Activated naive CD4-positive, alpha-beta T cell treated with anti-CD3 and anti-CD28 coated beads, Interleukin-2, amount 10 ng/mL, durations not matched to agents 7 days and 5 days (primary cell): ENCODE measurements at regions of chr6 and their contacts with region 1.

Region 1: GRCh38 chr6:43143235-43144124 is 27.6 kb upstream of the SRF start:
- DNase-seq: peak; percentile 83
- H3K4me3 Mint-ChIP-seq: no peak overlapping the region
- H3K27ac Mint-ChIP-seq: no peak overlapping the region
- H3K4me1 Mint-ChIP-seq: peaks cover 17% of the 10 kb centered on the region
- H3K27me3 Mint-ChIP-seq: peaks cover 27% of the 10 kb centered on the region

Region 2: GRCh38 chr6:42901536-42901957 is 241.9 kb before region 1 on chr6:
- CTCF ChIA-PET with region 1: interaction called, 28 read pairs
- DNase-seq: peak; percentile 78
- H3K4me3 Mint-ChIP-seq: no peak overlapping the region
- H3K27ac Mint-ChIP-seq: no peak overlapping the region
- H3K4me1 Mint-ChIP-seq: peaks cover 17% of the 10 kb centered on the region
- H3K27me3 Mint-ChIP-seq: peaks cover 3% of the 10 kb centered on the region

Region 3: GRCh38 chr6:42911171-42912021 is 232.1 kb before region 1 on chr6:
- CTCF ChIA-PET with region 1: interaction called, 18 read pairs
- DNase-seq: no peak
- H3K4me3 Mint-ChIP-seq: no peak overlapping the region
- H3K27ac Mint-ChIP-seq: no peak overlapping the region
- H3K4me1 Mint-ChIP-seq: peaks cover 3% of the 10 kb centered on the region
- H3K27me3 Mint-ChIP-seq: peaks cover 56% of the 10 kb centered on the region

Region 4: DNA sequence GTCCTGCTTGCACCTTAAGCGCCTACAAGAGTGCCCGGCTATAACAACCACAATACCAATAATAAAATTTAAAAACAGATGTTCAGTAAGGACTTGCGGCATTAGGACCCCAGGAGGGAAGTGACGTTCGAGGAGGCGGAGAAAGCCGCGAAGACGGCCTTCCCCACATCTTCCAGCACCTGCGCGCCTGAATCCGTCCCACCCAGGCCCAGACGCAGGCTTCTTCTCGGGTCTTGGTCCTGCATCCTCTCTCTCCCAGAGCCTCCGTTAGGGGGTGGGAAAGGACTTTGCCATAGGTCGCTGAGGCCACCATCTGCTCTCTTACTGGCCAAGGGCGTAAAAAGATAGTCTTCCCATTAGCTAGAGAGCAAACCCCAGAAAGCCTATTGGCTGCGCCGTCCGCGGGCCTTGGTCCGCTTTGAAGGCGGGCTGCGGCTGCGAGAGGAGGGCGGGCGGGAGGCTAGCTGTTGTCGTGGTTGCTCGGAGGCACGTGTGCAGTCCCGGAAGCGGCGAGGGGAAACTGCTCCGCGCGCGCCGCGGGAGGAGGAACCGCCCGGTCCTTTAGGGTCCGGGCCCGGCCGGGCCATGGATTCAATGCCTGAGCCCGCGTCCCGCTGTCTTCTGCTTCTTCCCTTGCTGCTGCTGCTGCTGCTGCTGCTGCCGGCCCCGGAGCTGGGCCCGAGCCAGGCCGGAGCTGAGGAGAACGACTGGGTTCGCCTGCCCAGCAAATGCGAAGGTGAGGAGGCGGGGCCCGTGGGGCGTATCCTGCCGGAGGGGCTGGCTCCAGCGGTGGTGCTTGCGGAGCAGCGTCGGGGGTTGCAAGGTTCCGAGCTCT is 214.3 kb before region 1 on chr6 and contains the start of gene CNPY3:
- CTCF ChIA-PET with region 1: interaction called, 12 read pairs
- DNase-seq: peak; percentile 98
- H3K4me3 Mint-ChIP-seq: peak within 1 kb of the TSS; percentile 98
- H3K27ac Mint-ChIP-seq: peak within 1 kb of the TSS; percentile 100
- H3K4me1 Mint-ChIP-seq: peaks cover 41% of the 10 kb centered on the region
- H3K27me3 Mint-ChIP-seq: no peaks in the 10 kb centered on the region

Region 5: GRCh38 chr6:43009124-43009523 is 134.4 kb before region 1 on chr6:
- CTCF ChIA-PET with region 1: interaction called, 12 read pairs
- DNase-seq: peak; percentile 63
- H3K4me3 Mint-ChIP-seq: no peak overlapping the region
- H3K27ac Mint-ChIP-seq: no peak overlapping the region
- H3K4me1 Mint-ChIP-seq: peaks cover 29% of the 10 kb centered on the region
- H3K27me3 Mint-ChIP-seq: no peaks in the 10 kb centered on the region

Region 6: GRCh38 chr6:43021270-43022047 is 122.0 kb before region 1 on chr6 and contains the start of gene RRP36:
- CTCF ChIA-PET with region 1: interaction called, 12 read pairs
- DNase-seq: peak; percentile 75
- H3K4me3 Mint-ChIP-seq: peak within 1 kb of the TSS; percentile 98
- H3K27ac Mint-ChIP-seq: peak within 1 kb of the TSS; percentile 93
- H3K4me1 Mint-ChIP-seq: peaks cover 36% of the 10 kb centered on the region
- H3K27me3 Mint-ChIP-seq: no peaks in the 10 kb centered on the region

Region 7: GRCh38 chr6:43059168-43060033 is 84.1 kb before region 1 on chr6 and contains the starts of genes KLC4 and MRPL2:
- CTCF ChIA-PET with region 1: interaction called, 11 read pairs
- DNase-seq: peak; percentile 99
- H3K4me3 Mint-ChIP-seq: peak within 1 kb of the TSS; percentile 93
- H3K27ac Mint-ChIP-seq: peak within 1 kb of the TSS; percentile 98
- H3K4me1 Mint-ChIP-seq: peaks cover 42% of the 10 kb centered on the region
- H3K27me3 Mint-ChIP-seq: no peaks in the 10 kb centered on the region

Region 8: DNA sequence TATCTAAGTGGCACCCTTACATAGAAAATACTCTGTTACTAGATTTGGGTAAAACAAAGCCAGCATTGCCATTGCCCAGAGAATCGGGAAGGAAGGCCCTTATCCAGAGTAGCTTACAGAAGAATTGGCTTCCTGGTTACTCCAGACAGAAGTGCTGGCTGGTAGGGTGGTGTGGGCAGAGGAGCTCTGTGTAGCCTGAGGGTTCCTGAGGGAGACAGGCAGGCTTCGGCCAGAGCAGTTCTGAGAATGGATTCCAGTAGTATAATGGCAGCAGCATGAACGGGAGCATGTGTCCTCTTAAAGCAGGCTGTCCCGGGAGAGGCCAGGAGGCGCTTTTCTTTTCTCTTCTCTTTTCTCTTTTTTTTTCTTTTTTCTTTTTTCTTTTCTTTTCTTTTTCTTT is 50.5 kb after region 1 on chr6:
- CTCF ChIA-PET with region 1: no interaction called
- DNase-seq: peak; percentile 18
- H3K4me3 Mint-ChIP-seq: no peak overlapping the region
- H3K27ac Mint-ChIP-seq: no peak overlapping the region
- H3K4me1 Mint-ChIP-seq: peaks cover 3% of the 10 kb centered on the region
- H3K27me3 Mint-ChIP-seq: no peaks in the 10 kb centered on the region